ENCODE measurements at regions of chr12 and their contacts with region 1.

Region 1: GRCh38 chr12:57069523-57069922 is 9.1 kb downstream of the NEMP1 start:
- DNase-seq: peak in 8 of 9 experiments; percentile 28 to 88 (median 61)
- ATAC-seq: peak; percentile 99
- H3K4me3 ChIP-seq: no peak overlapping the region
- H3K4me3 Mint-ChIP-seq: peak overlapping the region; percentile 16
- H3K27ac ChIP-seq: peak overlapping the region in 1 of 2 experiments; percentile 28
- H3K27ac Mint-ChIP-seq: peak overlapping the region; percentile 70
- H3K4me1 ChIP-seq: peaks cover 18% of the 10 kb centered on the region
- H3K4me1 Mint-ChIP-seq: peaks cover 23% of the 10 kb centered on the region
- H3K27me3 ChIP-seq: no peaks in the 10 kb centered on the region
- H3K27me3 Mint-ChIP-seq: no peaks in the 10 kb centered on the region
- CTCF ChIP-seq: peak; percentile 86

Region 2: DNA sequence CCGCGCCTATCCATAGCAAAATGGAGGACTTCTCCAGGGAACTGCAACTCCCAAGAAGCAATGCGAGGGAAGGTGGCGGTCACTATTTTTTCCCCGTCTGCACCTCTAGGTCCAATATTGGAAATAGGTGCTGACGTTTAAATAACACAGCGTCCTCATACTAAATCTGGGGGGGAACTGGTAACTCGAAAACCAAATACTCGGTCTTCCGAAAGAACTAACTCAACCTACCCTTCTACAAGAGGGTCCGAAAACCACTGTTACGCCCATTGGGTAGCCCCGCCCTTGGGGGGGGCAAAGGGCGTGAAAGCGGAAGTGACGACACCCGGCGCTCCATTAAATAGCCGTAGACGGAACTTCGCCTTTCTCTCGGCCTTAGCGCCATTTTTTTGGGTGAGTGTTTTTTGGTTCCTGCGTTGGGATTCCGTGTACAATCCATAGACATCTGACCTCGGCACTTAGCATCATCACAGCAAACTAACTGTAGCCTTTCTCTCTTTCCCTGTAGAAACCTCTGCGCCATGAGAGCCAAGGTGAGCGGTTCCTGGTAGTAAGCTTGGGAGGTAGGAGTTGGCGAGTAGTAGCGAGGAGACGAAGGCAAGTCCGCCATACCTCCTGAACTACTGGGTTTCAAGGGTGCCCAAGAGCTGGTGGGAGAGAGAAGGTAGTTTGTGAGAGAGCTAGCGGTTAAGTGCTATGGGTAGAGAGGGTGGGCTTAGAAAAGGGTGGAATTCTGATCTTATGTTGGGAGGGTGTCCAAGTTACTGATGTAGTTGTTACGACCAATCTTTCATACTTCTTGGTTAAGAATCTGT is 953.0 kb before region 1 on chr12 and contains the start of gene RPL41:
- CTCF ChIA-PET with region 1: no interaction called
- POLR2A ChIA-PET with region 1: no interaction called
- intact Hi-C with region 1: no loop called
- DNase-seq: peak; percentile 89 to 98 (median 94)
- ATAC-seq: peak; percentile 51
- H3K4me3 ChIP-seq: peak within 1 kb of the TSS; percentile 63 to 86
- H3K4me3 Mint-ChIP-seq: peak within 1 kb of the TSS; percentile 98
- H3K27ac ChIP-seq: peak within 1 kb of the TSS; percentile 87 to 95
- H3K27ac Mint-ChIP-seq: peak within 1 kb of the TSS; percentile 99
- H3K4me1 ChIP-seq: peaks cover 30% of the 10 kb centered on the region
- H3K4me1 Mint-ChIP-seq: peaks cover 38% of the 10 kb centered on the region
- H3K27me3 ChIP-seq: no peaks in the 10 kb centered on the region
- H3K27me3 Mint-ChIP-seq: no peaks in the 10 kb centered on the region
- CTCF ChIP-seq: no peak
- total RNA-seq, gene RPL41: 5,791 to 5,914 TPM

Region 3: GRCh38 chr12:57058454-57058853 is 11.1 kb before region 1 on chr12:
- CTCF ChIA-PET with region 1: interaction called, 11 read pairs
- POLR2A ChIA-PET with region 1: no interaction called
- intact Hi-C with region 1: no loop called
- DNase-seq: no peak
- ATAC-seq: no peak
- H3K4me3 ChIP-seq: no peak overlapping the region
- H3K4me3 Mint-ChIP-seq: no peak overlapping the region
- H3K27ac ChIP-seq: no peak overlapping the region
- H3K27ac Mint-ChIP-seq: no peak overlapping the region
- H3K4me1 ChIP-seq: peaks cover 7% of the 10 kb centered on the region
- H3K4me1 Mint-ChIP-seq: peaks cover 9% of the 10 kb centered on the region
- H3K27me3 ChIP-seq: no peaks in the 10 kb centered on the region
- H3K27me3 Mint-ChIP-seq: no peaks in the 10 kb centered on the region
- CTCF ChIP-seq: no peak

Region 4: DNA sequence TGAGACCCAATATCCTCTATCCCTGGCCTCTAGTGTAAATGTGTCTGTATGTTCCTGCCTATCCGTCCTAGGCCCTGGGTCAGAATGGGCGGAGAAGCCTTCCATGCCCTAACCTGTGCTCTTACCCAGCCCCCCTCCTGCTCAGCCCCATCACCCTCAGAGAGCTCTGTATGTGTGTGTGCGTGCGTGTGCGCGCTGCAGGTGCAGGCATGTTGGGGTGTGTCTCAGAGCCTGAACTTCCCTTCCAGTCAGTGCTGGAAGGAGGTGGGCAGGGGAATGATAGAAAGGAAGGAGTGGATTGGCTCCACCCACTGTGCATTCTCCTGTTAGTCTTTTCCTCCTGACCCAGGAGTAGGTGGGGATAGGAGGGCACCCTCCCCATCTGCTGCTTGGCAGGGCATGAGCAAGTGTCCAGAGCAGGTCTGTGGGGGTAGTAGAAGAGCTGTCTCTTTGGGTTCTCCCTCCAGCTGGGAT is 26.6 kb after region 1 on chr12:
- CTCF ChIA-PET with region 1: interaction called, 76 read pairs
- POLR2A ChIA-PET with region 1: interaction called, 8 read pairs
- intact Hi-C with region 1: loop called (anchors 1 kb)
- DNase-seq: no peak
- ATAC-seq: no peak
- H3K4me3 ChIP-seq: no peak overlapping the region
- H3K4me3 Mint-ChIP-seq: no peak overlapping the region
- H3K27ac ChIP-seq: no peak overlapping the region
- H3K27ac Mint-ChIP-seq: peak overlapping the region; percentile 69
- H3K4me1 ChIP-seq: peaks cover 36% of the 10 kb centered on the region
- H3K4me1 Mint-ChIP-seq: peaks cover 57% of the 10 kb centered on the region
- H3K27me3 ChIP-seq: no peaks in the 10 kb centered on the region
- H3K27me3 Mint-ChIP-seq: no peaks in the 10 kb centered on the region
- CTCF ChIP-seq: no peak

Region 5: DNA sequence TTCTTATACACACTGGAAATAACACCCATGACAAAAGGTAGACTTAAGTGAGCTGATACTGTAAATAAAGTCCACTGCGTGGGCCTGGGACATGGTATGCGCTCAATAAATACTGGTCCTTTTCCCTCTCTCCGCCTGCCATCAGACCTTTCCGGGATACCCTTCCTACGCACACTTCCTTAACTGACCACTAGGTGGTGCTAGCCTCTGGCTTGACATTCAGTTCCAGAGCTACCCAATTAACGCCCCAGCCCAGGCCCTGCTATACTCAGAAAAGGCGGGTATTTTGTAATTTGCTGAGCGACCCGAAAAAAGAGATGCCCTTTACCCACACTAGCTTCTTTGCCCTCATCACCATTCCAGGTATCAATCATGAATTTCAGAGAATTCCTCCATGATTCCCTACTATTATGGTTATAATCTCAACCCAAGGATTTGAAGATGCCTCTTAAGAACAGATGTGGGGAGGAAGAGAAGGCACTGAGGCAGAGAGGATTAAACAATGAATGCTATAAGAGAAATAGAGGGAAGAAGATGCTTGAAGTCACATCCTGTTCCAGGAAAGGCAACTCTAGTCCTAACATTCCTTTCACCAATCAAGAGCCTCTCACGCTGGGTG is 54.8 kb after region 1 on chr12:
- CTCF ChIA-PET with region 1: interaction called, 28 read pairs
- POLR2A ChIA-PET with region 1: no interaction called
- intact Hi-C with region 1: no loop called
- DNase-seq: peak; percentile 45 to 86 (median 76)
- ATAC-seq: peak; percentile 69
- H3K4me3 ChIP-seq: no peak overlapping the region
- H3K4me3 Mint-ChIP-seq: no peak overlapping the region
- H3K27ac ChIP-seq: no peak overlapping the region
- H3K27ac Mint-ChIP-seq: no peak overlapping the region
- H3K4me1 ChIP-seq: peaks cover 13% of the 10 kb centered on the region
- H3K4me1 Mint-ChIP-seq: peaks cover 12% of the 10 kb centered on the region
- H3K27me3 ChIP-seq: peaks cover 0 to 5% of the 10 kb centered on the region in 2 experiments
- H3K27me3 Mint-ChIP-seq: no peaks in the 10 kb centered on the region
- CTCF ChIP-seq: peak; percentile 91

Region 6: GRCh38 chr12:57182921-57183790 is 113.6 kb after region 1 on chr12:
- CTCF ChIA-PET with region 1: interaction called, 15 read pairs
- POLR2A ChIA-PET with region 1: interaction called, 3 read pairs
- intact Hi-C with region 1: loop called (anchors 1 kb)
- DNase-seq: peak; percentile 63 to 88 (median 82)
- ATAC-seq: peak; percentile 100
- H3K4me3 ChIP-seq: no peak overlapping the region
- H3K4me3 Mint-ChIP-seq: no peak overlapping the region
- H3K27ac ChIP-seq: no peak overlapping the region
- H3K27ac Mint-ChIP-seq: no peak overlapping the region
- H3K4me1 ChIP-seq: peaks cover 5% of the 10 kb centered on the region
- H3K4me1 Mint-ChIP-seq: peaks cover 2% of the 10 kb centered on the region
- H3K27me3 ChIP-seq: no peaks in the 10 kb centered on the region
- H3K27me3 Mint-ChIP-seq: no peaks in the 10 kb centered on the region
- CTCF ChIP-seq: peak; percentile 83